GM18951 (cell line): ENCODE measurements at regions of chr18 and their contacts with region 1.

Region 1: DNA sequence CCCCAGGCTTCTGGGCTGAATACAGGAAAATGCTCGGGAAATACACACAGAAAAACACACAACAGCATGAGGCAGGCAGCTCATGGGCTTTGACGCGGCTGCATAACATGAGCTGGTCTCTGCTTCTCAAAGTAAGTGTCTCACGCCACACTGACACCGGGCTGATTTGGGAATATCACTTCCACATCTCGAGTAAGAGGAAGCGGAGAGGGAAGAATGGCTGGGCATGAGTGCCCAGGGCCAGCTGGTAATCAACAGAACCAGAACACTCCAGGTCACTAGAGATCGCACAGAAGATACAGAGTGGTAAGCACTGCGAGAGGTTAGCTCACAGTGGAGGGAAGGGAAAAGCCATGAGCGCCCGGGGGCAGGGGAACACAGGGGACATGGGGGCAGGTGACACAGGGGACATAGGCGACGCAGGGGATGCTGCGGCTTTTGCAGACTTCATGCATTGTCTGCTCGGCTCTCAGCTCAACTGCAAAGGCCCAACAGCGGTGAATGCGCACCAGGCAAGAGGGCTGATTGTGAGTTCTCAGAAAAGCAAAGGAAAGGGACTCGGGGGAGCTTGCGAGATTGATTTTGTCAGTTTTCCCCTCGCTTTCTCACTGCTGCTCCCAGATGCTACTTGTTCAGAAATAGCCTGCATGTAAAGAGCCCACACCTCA is 141.4 kb downstream of the MBP start:
- POLR2A ChIP-seq: no peak

Region 2: GRCh38 chr18:76620321-76621170 is 370.6 kb before region 1 on chr18:
- in situ Hi-C with region 1: no loop called
- POLR2A ChIP-seq: no peak

Region 3: DNA sequence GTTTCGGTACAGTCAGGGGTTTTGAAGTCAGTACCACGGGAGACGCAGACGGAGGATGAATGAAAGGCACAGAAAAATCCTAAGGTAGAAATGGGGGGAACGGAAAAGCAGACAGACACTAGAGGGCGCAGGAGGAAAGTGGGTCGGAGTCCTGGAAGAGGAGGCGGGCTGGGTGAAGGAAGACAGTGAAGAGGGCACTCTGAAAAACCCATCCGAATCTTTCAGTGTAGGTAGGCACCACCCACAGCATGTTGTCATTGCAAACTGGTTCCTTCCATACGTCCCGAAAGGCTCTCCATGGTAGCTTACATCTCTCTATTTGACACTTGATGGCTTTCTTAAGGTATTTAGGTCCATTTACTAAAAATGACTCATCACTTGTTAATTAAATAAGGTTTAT is 187.3 kb before region 1 on chr18:
- in situ Hi-C with region 1: loop called (anchors 10 kb)
- POLR2A ChIP-seq: no peak

Region 4: GRCh38 chr18:76816127-76816526 is 175.0 kb before region 1 on chr18:
- in situ Hi-C with region 1: no loop called
- POLR2A ChIP-seq: no peak